PC-9 (cell line): ENCODE measurements at regions of chr5 and their contacts with region 1.

Region 1: DNA sequence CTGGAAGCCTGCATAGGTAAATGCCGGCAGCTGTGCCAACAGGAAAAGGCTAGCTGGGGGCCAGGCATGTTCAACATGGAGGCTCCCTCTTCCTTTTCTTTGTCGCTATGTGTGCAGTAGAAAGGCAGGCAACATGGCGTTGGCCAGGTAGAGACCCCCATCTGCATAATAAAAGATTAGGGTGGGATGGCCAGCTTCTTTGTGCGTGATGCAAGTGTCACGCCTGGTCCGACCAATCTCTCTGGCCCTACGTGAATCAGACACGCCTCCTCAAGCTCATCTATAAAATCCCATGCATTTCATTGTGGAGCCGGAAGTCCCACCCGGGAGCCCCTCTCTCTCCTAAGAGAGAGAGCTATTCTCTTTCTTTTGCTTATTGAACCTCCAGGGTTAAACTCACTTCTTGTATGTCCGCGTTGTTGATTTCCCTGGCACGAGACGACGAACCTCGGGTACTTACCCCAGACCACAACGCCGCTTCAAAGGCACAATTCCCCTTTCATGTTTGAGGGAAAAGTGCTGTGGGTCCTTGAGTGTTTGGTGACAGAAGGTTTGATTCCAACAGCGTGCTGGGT is 25.0 kb upstream of the C5orf47 start:
- DNase-seq: peak; percentile 41 to 64
- H3K4me3 ChIP-seq: peak overlapping the region; percentile 50; the same call in 1 of the 2 replicates
- H3K27ac ChIP-seq: peak overlapping the region; percentile 66
- H3K4me1 ChIP-seq: peaks cover 16% of the 10 kb centered on the region
- H3K27me3 ChIP-seq: no peaks in the 10 kb centered on the region
- CTCF ChIP-seq: no peak

Region 2: DNA sequence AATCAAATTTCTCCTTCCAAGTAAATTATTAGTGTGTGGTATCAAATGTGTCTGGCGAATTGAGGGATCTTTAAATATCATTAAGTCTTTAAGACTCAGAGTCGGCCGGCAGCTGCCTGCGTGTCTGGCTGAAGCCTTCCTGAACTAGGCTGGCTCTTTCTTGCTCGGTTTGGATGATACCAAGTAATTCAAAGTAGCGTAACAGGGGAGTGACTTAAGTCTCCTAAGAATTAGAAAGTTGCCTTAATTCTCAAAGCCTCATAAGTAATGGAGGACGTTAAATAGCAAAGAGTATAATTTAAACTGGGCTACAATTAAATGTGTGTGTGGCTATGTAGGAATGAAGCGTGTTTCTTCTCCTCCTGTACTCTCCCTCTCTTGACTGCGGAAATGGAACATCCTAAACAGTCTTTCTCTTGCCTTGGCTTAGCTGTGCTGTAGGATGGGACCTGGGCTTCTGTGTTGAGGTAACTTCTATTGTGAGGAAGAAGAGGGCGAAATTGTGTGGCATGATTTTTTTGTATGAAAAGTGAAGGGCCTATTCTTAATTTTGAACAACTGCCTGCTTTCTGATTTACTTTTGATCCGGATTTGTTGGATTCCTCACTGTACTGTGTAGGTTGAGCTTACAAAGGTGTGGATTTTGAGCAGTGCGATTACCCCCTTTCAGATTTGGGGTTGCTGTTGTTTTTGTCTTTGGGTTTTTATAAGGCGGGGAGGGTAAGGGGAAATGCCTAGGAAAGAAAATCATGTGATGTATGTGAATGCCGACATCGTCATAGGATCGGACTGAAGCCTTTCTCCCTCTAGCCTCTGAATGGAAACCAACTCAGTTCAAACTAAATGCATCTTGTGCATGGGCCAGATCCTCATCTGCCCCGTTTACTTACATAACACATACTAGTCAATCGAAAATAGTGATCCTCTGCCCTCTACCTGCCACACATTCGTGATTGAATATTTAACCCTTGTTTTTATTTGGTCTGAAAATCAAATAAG is 45.9 kb before region 1 on chr5:
- CTCF ChIA-PET with region 1: no interaction called
- POLR2A ChIA-PET with region 1: interaction called, 6 read pairs
- intact Hi-C with region 1: loop called (anchors 1 kb)
- DNase-seq: peak; percentile 53 to 76
- H3K4me3 ChIP-seq: peak overlapping the region; percentile 79
- H3K27ac ChIP-seq: peak overlapping the region; percentile 86
- H3K4me1 ChIP-seq: peaks cover 29% of the 10 kb centered on the region
- H3K27me3 ChIP-seq: no peaks in the 10 kb centered on the region
- CTCF ChIP-seq: peak; percentile 43; the same call in 1 of the 2 replicates

Region 3: GRCh38 chr5:173944511-173944910 is 19.4 kb before region 1 on chr5:
- CTCF ChIA-PET with region 1: interaction called, 10 read pairs
- POLR2A ChIA-PET with region 1: no interaction called
- intact Hi-C with region 1: no loop called
- DNase-seq: no peak
- H3K4me3 ChIP-seq: no peak overlapping the region
- H3K27ac ChIP-seq: no peak overlapping the region
- H3K4me1 ChIP-seq: peaks cover 14% of the 10 kb centered on the region; the same call in 1 of the 2 replicates
- H3K27me3 ChIP-seq: no peaks in the 10 kb centered on the region
- CTCF ChIP-seq: no peak

Region 4: GRCh38 chr5:173953528-173954090 is 10.3 kb before region 1 on chr5:
- CTCF ChIA-PET with region 1: no interaction called
- POLR2A ChIA-PET with region 1: interaction called, 10 read pairs
- intact Hi-C with region 1: no loop called
- DNase-seq: no peak
- H3K4me3 ChIP-seq: no peak overlapping the region
- H3K27ac ChIP-seq: peak overlapping the region; percentile 17; the same call in 1 of the 2 replicates
- H3K4me1 ChIP-seq: no peaks in the 10 kb centered on the region
- H3K27me3 ChIP-seq: no peaks in the 10 kb centered on the region
- CTCF ChIP-seq: no peak

Region 5: GRCh38 chr5:174482607-174483101 is 518.7 kb after region 1 on chr5:
- CTCF ChIA-PET with region 1: no interaction called
- POLR2A ChIA-PET with region 1: no interaction called
- intact Hi-C with region 1: no loop called
- DNase-seq: no peak
- H3K4me3 ChIP-seq: no peak overlapping the region
- H3K27ac ChIP-seq: no peak overlapping the region
- H3K4me1 ChIP-seq: no peaks in the 10 kb centered on the region
- H3K27me3 ChIP-seq: peaks cover 36% of the 10 kb centered on the region
- CTCF ChIP-seq: no peak